Gastrocnemius medialis (tissue), 4 donors: ENCODE measurements at regions of chrX and their contacts with region 1.

Region 1: GRCh38 chrX:122579526-122579925 is 604.6 kb upstream of the GRIA3 start:
- DNase-seq: no peak
- ATAC-seq: no peak
- H3K4me3 ChIP-seq: no peak overlapping the region
- H3K27ac ChIP-seq: no peak overlapping the region
- H3K4me1 ChIP-seq: no peaks in the 10 kb centered on the region
- H3K27me3 ChIP-seq: no peaks in the 10 kb centered on the region
- CTCF ChIP-seq: no peak
- POLR2A ChIP-seq: no peak

Region 2: DNA sequence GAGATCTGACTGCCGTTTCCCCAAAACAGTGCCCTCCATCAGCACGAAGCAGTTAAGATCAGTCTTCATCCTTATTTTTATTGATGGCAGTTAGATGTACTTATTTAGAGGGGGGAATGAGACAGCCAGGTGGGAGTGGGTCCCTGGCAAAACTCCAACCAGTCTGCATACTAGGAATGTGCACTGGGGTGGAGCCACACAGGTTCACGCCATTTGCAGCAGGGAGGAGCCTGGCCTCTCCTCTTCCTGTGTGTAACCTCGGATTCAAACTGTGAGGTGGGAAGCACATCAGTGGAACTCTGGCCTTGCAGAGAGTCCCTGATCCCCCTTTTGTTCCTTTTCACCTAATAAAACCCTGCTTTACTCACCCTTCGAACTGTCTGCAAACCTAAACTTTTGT is 383.2 kb before region 1 on chrX:
- in situ Hi-C with region 1: no loop called
- intact Hi-C with region 1: loop called (anchors 10 kb)
- DNase-seq: no peak
- ATAC-seq: no peak
- H3K4me3 ChIP-seq: no peak overlapping the region
- H3K27ac ChIP-seq: no peak overlapping the region
- H3K4me1 ChIP-seq: no peaks in the 10 kb centered on the region
- H3K27me3 ChIP-seq: no peaks in the 10 kb centered on the region
- CTCF ChIP-seq: no peak
- POLR2A ChIP-seq: no peak